ENCODE measurements at regions of chr1 and their contacts with region 1.

Region 1: GRCh38 chr1:200488375-200489165 is 78.7 kb upstream of the ZNF281 start:
- DNase-seq: peak; percentile 79
- H3K27ac ChIP-seq: peak overlapping the region; percentile 52
- CTCF ChIP-seq: peak; percentile 84

Region 2: DNA sequence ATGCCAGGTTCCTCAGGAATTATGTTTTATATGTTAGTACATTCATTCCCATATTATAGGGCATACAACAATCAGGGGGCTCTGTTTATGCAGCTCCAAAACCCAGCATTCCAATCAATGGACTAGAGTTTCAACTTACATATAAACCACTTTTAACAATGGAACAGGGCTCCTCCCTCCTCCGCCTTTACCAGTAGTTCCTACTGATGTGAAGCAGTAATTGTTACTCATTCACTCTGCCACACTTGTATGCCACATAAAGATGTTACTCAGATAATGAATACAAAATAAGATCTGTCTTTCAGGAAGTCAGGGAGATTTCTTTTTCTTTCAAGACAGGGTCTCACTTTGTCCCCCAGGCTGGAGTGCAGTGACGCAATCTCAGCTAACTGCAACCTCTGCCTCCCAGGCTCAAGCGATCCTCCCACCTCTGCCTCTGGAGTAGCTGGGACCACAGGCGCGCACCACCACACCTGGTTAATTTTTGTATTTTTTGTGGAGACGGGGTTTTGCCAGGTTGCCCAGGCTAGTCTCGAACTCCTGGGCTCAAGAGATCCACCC is 95.9 kb before region 1 on chr1:
- CTCF ChIA-PET with region 1: interaction called, 10 read pairs
- POLR2A ChIA-PET with region 1: no interaction called
- DNase-seq: no peak
- H3K27ac ChIP-seq: 0 out of 2 replicates have a peak overlapping the region, but pooled peaks have one; percentile 22
- CTCF ChIP-seq: no peak

Measured in RWPE1 (cell line).